ENCODE measurements at regions of chr3 and their contacts with region 1.

Region 1: GRCh38 chr3:93994056-93994455 is 14.1 kb downstream of the ARL13B start:
- DNase-seq: peak; percentile 15
- ATAC-seq: no peak
- H3K4me3 ChIP-seq: no peak overlapping the region
- H3K27ac ChIP-seq: no peak overlapping the region
- H3K4me1 ChIP-seq: no peaks in the 10 kb centered on the region
- H3K27me3 ChIP-seq: no peaks in the 10 kb centered on the region
- CTCF ChIP-seq: no peak
- POLR2A ChIP-seq: no peak
- RAD21 ChIP-seq: no peak

Region 2: DNA sequence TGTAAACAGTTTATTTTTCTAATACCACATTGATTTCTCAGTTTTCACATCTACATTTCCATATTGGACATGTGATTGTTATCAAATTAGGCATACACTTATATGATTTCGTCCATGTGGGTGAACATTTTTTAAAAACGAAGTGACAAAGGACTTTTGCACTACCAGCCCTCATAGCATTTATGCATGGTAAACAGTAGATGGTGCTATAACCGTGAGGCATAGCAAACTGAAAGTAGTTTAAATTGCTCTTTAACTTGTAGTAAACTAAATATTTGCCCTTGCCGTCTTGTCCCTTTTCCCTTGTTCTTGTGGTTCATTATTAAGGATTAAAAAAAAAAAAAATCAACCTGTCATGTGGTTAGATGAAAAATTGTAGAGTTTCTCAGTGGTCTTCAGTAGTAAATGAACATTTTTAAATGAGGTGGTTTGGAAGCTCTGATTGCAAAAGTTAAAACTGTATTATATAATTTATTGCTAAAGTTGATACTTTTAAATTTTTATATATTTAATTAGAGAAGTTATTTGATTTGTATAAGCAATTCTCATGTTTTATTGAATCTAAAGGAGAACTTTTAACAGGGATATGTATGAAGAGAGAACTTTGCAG is 10.3 kb after region 1 on chr3:
- CTCF ChIA-PET with region 1: interaction called, 13 read pairs
- POLR2A ChIA-PET with region 1: no interaction called
- dilution Hi-C with region 1: no loop called
- in situ Hi-C with region 1: no loop called
- intact Hi-C with region 1: no loop called
- DNase-seq: peak; percentile 82
- ATAC-seq: peak; percentile 90
- H3K4me3 ChIP-seq: no peak overlapping the region
- H3K27ac ChIP-seq: no peak overlapping the region
- H3K4me1 ChIP-seq: peaks cover 4% of the 10 kb centered on the region; the same call in 1 of the 2 replicates
- H3K27me3 ChIP-seq: no peaks in the 10 kb centered on the region
- CTCF ChIP-seq: peak; percentile 85
- POLR2A ChIP-seq: no peak
- RAD21 ChIP-seq: peak; percentile 81

Measured in IMR-90 (cell line).